ENCODE measurements at regions of chr5 and their contacts with region 1.

Region 1: DNA sequence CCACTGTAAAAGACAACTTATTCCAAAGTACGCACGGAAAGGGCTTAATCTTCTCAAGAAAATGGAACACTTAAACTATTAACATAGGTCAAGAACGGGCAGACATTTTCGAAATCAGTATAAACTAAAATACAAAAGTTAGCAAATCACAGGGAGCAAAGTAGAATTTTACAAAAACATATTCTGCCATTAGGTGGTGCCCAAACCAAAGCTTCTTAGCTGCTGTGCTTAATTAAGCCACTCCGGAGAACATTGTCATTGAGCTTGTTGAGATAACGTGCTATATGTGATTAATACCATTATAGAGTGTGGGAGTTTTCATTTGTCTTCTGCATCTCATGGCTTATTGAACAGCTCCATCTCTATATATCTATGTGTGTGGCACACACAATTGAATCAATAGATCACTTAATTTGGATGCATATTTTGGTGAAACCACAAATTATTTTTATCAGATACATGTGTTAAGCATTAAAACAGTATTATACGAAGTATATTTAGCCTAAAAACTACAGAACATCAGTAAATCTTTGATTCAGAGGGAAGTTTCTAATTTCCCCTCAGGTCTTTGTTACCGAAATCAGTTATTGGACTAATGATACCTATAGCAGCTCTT is 23.4 kb downstream of the UBLCP1 start:
- DNase-seq: no peak
- H3K4me3 ChIP-seq: no peak overlapping the region
- H3K27ac ChIP-seq: no peak overlapping the region
- H3K4me1 ChIP-seq: no peaks in the 10 kb centered on the region
- H3K27me3 ChIP-seq: no peaks in the 10 kb centered on the region
- CTCF ChIP-seq: peak in 1 of 3 experiments; percentile 50

Region 2: DNA sequence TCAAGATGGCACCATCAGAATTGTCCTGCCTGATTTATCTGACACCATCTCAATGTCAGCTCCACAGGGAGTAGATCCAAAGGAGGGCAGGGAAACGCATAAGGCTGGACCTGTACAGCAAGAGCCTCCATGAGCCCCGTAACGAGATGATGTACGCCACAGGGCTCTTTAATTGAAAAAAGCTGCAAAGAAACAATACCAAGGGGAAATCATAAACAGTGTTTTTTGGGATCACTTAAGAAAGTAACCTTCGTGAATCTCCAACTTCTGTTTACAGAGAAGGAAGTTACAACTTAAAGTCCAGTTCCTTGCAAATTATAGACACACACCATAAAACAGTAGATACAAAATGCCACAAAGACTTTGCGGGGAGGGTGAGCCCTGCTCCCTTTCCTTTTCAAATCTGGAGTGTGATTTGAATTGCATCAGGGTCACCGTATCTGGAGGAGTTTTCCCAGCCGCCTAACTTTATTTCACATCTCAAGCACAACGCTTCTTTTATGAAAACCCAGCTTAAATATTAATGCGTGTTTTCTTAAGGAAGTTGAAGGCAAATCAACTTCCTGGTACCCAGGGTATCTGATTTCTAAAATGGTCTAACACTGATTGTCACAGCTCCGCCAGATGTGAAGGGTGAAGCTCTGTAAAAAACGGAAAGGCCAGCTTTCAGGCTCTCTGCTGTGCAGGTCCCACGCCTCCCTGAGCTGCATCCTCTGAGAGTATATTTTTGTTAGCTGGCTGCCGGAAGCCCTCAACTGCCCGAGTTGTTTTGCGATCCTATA is 275.7 kb before region 1 on chr5:
- intact Hi-C with region 1: no loop called
- DNase-seq: no peak
- H3K4me3 ChIP-seq: peak overlapping the region in 1 of 2 donors; percentile 49
- H3K27ac ChIP-seq: peak overlapping the region; percentile 69 to 77
- H3K4me1 ChIP-seq: peaks cover 0 to 31% of the 10 kb centered on the region in 2 donors
- H3K27me3 ChIP-seq: no peaks in the 10 kb centered on the region
- CTCF ChIP-seq: no peak

Region 3: GRCh38 chr5:159987031-159987674 is 700.6 kb after region 1 on chr5:
- intact Hi-C with region 1: loop called (anchors 5 kb)
- DNase-seq: peak in 1 of 2 donors; percentile 86
- H3K4me3 ChIP-seq: peak overlapping the region; percentile 54 to 74
- H3K27ac ChIP-seq: no peak overlapping the region
- H3K4me1 ChIP-seq: peaks cover 0 to 4% of the 10 kb centered on the region in 2 donors
- H3K27me3 ChIP-seq: no peaks in the 10 kb centered on the region
- CTCF ChIP-seq: peak; percentile 73 to 92 (median 75)

Measured in ascending aorta (tissue), 2 donors.